ENCODE measurements at regions of chr1 and their contacts with region 1.

Region 1: DNA sequence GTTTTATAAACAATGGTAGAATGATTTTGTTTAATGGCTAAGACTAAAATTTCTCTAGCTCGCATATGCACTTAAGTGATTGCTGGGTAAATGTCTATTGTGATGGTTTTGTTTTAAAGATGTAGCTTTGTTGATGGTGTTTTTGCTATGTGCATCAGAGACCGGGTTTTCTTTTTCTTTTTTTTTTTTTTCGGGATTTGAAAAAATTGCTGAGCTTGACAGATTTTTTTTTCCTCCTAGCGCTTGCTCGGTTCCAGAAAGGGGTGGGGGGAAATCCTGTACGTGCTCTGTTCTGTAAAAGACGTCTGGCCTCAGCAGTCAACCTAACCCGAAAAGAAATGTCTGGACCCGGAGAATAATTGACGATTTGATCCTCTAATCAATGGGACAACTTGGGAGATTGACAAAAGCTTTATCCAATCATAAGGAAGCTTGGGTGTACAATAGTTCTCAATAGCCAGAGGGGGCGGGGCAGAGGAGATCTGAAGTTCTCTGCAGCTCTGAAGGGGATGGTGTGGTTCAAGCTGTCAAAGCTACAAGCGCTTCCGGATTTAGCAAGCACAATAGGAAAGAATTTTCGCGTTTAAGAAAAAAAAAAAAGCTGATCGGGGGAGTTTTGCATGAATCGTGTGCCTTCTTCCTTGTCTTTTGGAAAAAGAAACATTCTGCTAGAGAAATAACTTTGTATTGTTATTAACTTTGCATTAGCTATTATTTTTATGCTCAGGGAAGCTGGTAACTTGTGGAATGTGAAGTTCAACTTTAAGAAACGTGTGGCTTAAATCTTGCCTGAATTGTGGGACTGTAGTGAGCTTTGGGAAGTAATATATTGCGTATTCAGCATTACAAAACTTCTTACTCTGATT is 4.5 kb upstream of the NFIA start:
- DNase-seq: peak; percentile 86 to 96
- H3K4me3 ChIP-seq: peak overlapping the region; percentile 75 to 95
- H3K27ac ChIP-seq: peak overlapping the region; percentile 82 to 95
- H3K4me1 ChIP-seq: peaks cover 8 to 35% of the 10 kb centered on the region in 2 donors
- H3K27me3 ChIP-seq: no peaks in the 10 kb centered on the region
- CTCF ChIP-seq: no peak

Region 2: DNA sequence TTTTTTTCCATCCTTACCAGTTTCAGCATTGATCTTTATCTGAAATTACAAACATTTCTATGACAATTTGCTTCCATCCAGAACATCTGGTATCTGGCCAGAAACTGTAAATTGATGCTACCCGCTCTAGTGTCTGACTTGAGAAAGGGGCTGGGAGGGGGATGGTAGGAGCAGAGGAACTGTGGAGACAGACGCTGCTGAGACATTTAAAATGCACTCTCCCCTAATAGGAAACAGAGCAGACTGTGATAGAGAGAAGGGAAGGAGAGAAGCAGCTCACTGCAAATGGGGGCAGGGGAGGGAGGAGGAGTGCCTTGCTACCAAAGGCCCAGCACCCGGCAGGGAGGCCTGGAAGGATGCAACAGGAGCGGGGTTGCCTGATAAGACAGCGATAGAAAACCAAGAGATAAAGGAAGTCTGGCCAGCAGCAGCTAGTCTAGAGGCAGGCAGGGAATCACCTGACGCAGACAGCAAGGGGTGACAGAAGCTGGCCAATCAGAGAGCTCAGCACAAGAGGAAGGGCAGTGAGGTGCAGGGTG is 191.0 kb before region 1 on chr1:
- intact Hi-C with region 1: no loop called
- DNase-seq: no peak
- H3K4me3 ChIP-seq: no peak overlapping the region
- H3K27ac ChIP-seq: no peak overlapping the region
- H3K4me1 ChIP-seq: no peaks in the 10 kb centered on the region
- H3K27me3 ChIP-seq: no peaks in the 10 kb centered on the region
- CTCF ChIP-seq: no peak

Region 3: DNA sequence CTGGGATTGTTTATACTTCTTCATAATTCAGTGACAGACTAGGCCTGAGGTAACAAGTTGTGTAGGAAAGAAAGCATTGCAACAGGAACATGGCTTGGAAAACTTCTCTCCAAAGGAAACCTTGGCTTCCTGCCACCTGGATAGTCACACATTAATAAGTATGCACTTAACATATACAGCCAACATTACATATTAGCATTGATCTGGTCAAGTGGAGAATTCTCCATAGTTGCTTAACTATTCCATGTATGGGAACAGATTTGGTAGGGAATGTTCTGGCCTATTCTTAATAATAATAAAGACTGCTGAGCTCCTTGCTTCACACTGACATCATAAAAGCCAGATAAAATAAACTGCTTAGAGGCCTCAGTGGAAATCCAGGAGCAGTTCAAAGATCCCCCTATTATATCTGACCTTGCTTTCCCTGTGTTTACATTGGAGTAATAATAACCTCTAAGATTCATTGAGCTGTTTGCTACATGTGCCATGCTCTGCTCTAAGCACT is 22.7 kb before region 1 on chr1:
- intact Hi-C with region 1: loop called (anchors 1 kb)
- DNase-seq: no peak
- H3K4me3 ChIP-seq: peak overlapping the region in 1 of 2 donors; percentile 82
- H3K27ac ChIP-seq: peak overlapping the region; percentile 97 to 98
- H3K4me1 ChIP-seq: peaks cover 3 to 28% of the 10 kb centered on the region in 2 donors
- H3K27me3 ChIP-seq: no peaks in the 10 kb centered on the region
- CTCF ChIP-seq: no peak

Region 4: GRCh38 chr1:61092642-61093041 is 14.7 kb after region 1 on chr1:
- intact Hi-C with region 1: loop called (anchors 1 kb)
- DNase-seq: no peak
- H3K4me3 ChIP-seq: peak overlapping the region; percentile 7 to 95
- H3K27ac ChIP-seq: peak overlapping the region; percentile 95 to 98
- H3K4me1 ChIP-seq: peaks cover 0 to 20% of the 10 kb centered on the region in 2 donors
- H3K27me3 ChIP-seq: no peaks in the 10 kb centered on the region
- CTCF ChIP-seq: no peak

Region 5: GRCh38 chr1:61190618-61191432 is 112.9 kb after region 1 on chr1:
- intact Hi-C with region 1: loop called (anchors 5 kb)
- DNase-seq: no peak
- H3K4me3 ChIP-seq: peak overlapping the region in 1 of 2 donors; percentile 14
- H3K27ac ChIP-seq: peak overlapping the region; percentile 84 to 92
- H3K4me1 ChIP-seq: peaks cover 5 to 47% of the 10 kb centered on the region in 2 donors
- H3K27me3 ChIP-seq: no peaks in the 10 kb centered on the region
- CTCF ChIP-seq: no peak

Region 6: GRCh38 chr1:61221642-61222041 is 143.7 kb after region 1 on chr1:
- intact Hi-C with region 1: no loop called
- DNase-seq: no peak
- H3K4me3 ChIP-seq: peak overlapping the region in 1 of 2 donors; percentile 40
- H3K27ac ChIP-seq: peak overlapping the region; percentile 10 to 30
- H3K4me1 ChIP-seq: peaks cover 4 to 29% of the 10 kb centered on the region in 2 donors
- H3K27me3 ChIP-seq: no peaks in the 10 kb centered on the region
- CTCF ChIP-seq: no peak

Region 7: GRCh38 chr1:61279570-61279969 is 201.7 kb after region 1 on chr1:
- intact Hi-C with region 1: loop called (anchors 5 kb)
- DNase-seq: no peak
- H3K4me3 ChIP-seq: peak overlapping the region in 1 of 2 donors; percentile 10
- H3K27ac ChIP-seq: peak overlapping the region; percentile 68 to 76
- H3K4me1 ChIP-seq: peaks cover 0 to 27% of the 10 kb centered on the region in 2 donors
- H3K27me3 ChIP-seq: no peaks in the 10 kb centered on the region
- CTCF ChIP-seq: no peak

Region 8: DNA sequence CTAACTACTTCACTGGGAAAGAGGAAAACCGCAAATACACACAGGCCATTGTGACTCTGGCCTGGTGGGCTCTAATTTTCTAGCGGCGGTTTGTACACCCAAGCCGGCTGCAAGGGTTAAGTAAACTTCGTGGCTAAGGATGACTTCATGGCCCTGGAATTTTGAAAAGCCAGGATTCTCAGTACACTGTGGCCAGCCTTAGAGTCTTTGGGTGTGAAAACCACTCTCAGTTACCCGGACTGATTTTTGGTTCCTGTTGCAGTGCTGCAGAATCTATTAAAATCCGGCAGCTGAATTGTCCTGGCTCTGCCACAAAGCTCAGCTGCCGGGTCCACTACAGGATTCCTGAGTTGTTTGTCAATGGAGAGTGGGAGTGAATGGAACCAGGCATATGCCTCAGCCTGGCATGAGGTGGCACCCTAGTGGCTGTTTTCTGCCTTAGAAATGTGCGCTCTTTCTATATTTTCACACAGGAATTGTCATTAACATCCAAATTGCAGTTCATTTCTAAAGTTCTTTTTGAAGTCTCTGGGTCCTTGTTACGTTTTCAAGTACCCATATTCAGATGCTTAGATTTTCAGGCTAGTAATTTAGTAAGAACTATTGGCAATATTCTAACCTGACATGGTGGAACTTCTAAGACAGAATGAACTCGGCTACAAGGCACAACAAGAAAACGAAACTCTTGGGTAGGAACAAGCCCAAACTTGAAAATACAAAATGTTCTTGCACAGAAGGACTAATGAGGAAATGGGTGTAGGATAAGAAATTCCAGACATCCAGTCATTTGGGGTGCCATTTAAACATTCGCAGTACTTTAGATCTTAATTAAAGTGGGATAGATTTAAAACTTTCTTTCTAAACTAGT is 260.3 kb after region 1 on chr1:
- intact Hi-C with region 1: loop called (anchors 2 kb)
- DNase-seq: peak; percentile 38 to 92
- H3K4me3 ChIP-seq: peak overlapping the region; percentile 27 to 54
- H3K27ac ChIP-seq: peak overlapping the region; percentile 86 to 88
- H3K4me1 ChIP-seq: peaks cover 3 to 45% of the 10 kb centered on the region in 2 donors
- H3K27me3 ChIP-seq: no peaks in the 10 kb centered on the region
- CTCF ChIP-seq: peak; percentile 71 to 80 (median 75)